ENCODE measurements at regions of chr4 and their contacts with region 1.

Region 1: GRCh38 chr4:183261953-183262775 is 57.9 kb downstream of the CLDN22 start:
- DNase-seq: peak; percentile 92
- H3K4me3 Mint-ChIP-seq: no peak overlapping the region
- H3K27ac Mint-ChIP-seq: no peak overlapping the region
- H3K4me1 Mint-ChIP-seq: peaks cover 6% of the 10 kb centered on the region
- H3K27me3 Mint-ChIP-seq: no peaks in the 10 kb centered on the region

Region 2: DNA sequence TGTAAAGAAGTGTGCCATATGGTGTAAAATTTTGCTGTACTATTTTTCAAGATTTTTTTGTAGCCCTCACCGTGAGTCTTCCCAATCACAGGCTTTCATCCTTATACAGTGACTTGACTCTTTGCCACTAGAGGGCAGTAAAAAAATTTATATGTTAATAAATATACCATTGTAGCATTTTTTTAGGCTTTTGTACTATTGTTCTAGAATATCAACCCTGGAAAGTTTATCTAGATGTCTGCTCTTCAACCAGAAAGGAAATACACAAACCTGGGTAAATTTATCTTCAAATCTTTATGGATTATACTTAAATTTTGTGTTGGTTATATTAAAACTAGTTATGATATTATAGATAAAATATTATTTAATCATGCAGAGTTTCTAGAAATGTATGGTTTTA is 783.7 kb before region 1 on chr4:
- CTCF ChIA-PET with region 1: no interaction called
- intact Hi-C with region 1: loop called (anchors 1 kb)
- DNase-seq: no peak
- H3K4me3 Mint-ChIP-seq: no peak overlapping the region
- H3K27ac Mint-ChIP-seq: no peak overlapping the region
- H3K4me1 Mint-ChIP-seq: no peaks in the 10 kb centered on the region
- H3K27me3 Mint-ChIP-seq: peaks cover 14% of the 10 kb centered on the region

Region 3: GRCh38 chr4:182917182-182918043 is 344.8 kb before region 1 on chr4 and contains the start of gene DCTD:
- CTCF ChIA-PET with region 1: interaction called, 3 read pairs
- intact Hi-C with region 1: loop called (anchors 1 kb)
- DNase-seq: peak; percentile 83
- H3K4me3 Mint-ChIP-seq: peak within 1 kb of the TSS; percentile 86
- H3K27ac Mint-ChIP-seq: peak within 1 kb of the TSS; percentile 92
- H3K4me1 Mint-ChIP-seq: peaks cover 53% of the 10 kb centered on the region
- H3K27me3 Mint-ChIP-seq: no peaks in the 10 kb centered on the region
- total RNA-seq, gene DCTD: 137 to 152 TPM

Region 4: GRCh38 chr4:183074296-183074990 is 187.7 kb before region 1 on chr4:
- CTCF ChIA-PET with region 1: interaction called, 80 read pairs
- intact Hi-C with region 1: loop called (anchors 1 kb)
- DNase-seq: no peak
- H3K4me3 Mint-ChIP-seq: no peak overlapping the region
- H3K27ac Mint-ChIP-seq: no peak overlapping the region
- H3K4me1 Mint-ChIP-seq: no peaks in the 10 kb centered on the region
- H3K27me3 Mint-ChIP-seq: peaks cover 2% of the 10 kb centered on the region

Region 5: DNA sequence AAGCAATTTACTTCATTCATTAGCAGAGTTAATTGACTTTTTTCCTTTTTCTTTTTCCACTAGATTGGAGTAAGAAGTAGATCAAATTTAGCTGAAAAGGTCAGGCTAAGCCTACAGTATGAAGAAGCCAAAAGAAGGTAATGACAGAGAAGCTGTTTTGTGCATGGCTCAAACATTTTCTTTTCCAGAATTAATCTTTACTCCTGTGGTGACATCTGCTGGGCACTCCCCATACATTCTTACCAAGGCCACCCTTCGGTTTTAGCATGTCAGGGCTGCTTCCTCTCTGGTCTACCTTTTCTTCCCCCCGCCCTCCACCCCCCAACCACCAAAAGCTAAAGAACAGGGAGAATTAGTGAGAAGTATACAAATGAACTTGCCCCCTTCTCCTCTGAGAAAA is 12.3 kb before region 1 on chr4:
- CTCF ChIA-PET with region 1: interaction called, 35 read pairs
- intact Hi-C with region 1: no loop called
- DNase-seq: peak; percentile 39
- H3K4me3 Mint-ChIP-seq: no peak overlapping the region
- H3K27ac Mint-ChIP-seq: no peak overlapping the region
- H3K4me1 Mint-ChIP-seq: no peaks in the 10 kb centered on the region
- H3K27me3 Mint-ChIP-seq: no peaks in the 10 kb centered on the region

Region 6: GRCh38 chr4:183407128-183407585 is 145.0 kb after region 1 on chr4:
- CTCF ChIA-PET with region 1: interaction called, 5 read pairs
- intact Hi-C with region 1: loop called (anchors 1 kb)
- DNase-seq: peak; percentile 94
- H3K4me3 Mint-ChIP-seq: peak overlapping the region; percentile 76
- H3K27ac Mint-ChIP-seq: peak overlapping the region; percentile 79
- H3K4me1 Mint-ChIP-seq: peaks cover 6% of the 10 kb centered on the region
- H3K27me3 Mint-ChIP-seq: no peaks in the 10 kb centered on the region

Measured in activated naive CD4-positive, alpha-beta T cell treated with anti-CD3 and anti-CD28 coated beads for 36 hours (primary cell).